ENCODE measurements at regions of chr12 and their contacts with region 1.

Region 1: GRCh38 chr12:94434171-94434570 is 25.5 kb downstream of the CEP83 start:
- DNase-seq: no peak
- H3K4me3 Mint-ChIP-seq: no peak overlapping the region
- H3K27ac Mint-ChIP-seq: no peak overlapping the region
- H3K4me1 Mint-ChIP-seq: peaks cover 27% of the 10 kb centered on the region
- H3K27me3 Mint-ChIP-seq: no peaks in the 10 kb centered on the region

Region 2: DNA sequence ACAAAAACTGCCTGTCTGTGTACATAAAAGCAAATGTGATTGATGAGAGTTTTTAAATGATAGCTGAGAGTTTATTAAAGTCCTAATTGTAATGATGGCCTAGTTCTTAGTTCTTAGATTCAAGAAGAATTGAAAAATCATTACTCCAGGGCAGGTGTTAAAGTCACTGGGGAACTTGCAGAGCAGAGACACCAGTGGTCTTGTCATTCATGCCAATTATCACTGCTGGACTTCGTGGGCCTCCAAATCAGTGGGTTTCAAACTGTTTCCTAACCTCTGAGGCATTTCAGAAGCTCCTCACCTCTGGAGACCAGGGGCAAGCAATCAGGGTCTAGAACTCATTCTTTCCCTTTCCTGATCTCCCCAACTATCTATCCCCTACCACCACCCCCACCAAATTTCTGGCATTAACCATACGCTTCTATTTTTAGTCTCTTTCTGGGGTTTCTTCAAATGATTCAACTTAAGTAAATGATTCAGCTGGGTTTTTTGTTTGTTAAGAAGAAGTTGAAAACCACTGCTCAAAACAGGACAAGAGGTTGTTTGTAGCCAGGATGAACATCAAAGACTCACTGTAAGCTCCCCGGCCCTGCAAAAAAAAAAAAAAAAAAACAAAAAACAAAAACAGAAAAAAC is 54.6 kb before region 1 on chr12:
- intact Hi-C with region 1: loop called (anchors 5 kb)
- DNase-seq: peak; percentile 61
- H3K4me3 Mint-ChIP-seq: peak overlapping the region; percentile 53
- H3K27ac Mint-ChIP-seq: peak overlapping the region; percentile 78
- H3K4me1 Mint-ChIP-seq: peaks cover 45% of the 10 kb centered on the region
- H3K27me3 Mint-ChIP-seq: no peaks in the 10 kb centered on the region

Measured in activated CD4-positive, alpha-beta T cell treated with anti-CD3 and anti-CD28 coated beads, Interleukin-2, amount 10 ng/mL, durations not matched to agents 24 days and 14 days (primary cell).